HEK293 (cell line): ENCODE measurements at regions of chr13 and their contacts with region 1.

Region 1: GRCh38 chr13:77868714-77869113 is 49.9 kb downstream of the EDNRB start:
- H3K4me3 ChIP-seq: no peak overlapping the region
- H3K27ac ChIP-seq: no peak overlapping the region
- H3K4me1 ChIP-seq: no peaks in the 10 kb centered on the region
- CTCF ChIP-seq: no peak

Region 2: DNA sequence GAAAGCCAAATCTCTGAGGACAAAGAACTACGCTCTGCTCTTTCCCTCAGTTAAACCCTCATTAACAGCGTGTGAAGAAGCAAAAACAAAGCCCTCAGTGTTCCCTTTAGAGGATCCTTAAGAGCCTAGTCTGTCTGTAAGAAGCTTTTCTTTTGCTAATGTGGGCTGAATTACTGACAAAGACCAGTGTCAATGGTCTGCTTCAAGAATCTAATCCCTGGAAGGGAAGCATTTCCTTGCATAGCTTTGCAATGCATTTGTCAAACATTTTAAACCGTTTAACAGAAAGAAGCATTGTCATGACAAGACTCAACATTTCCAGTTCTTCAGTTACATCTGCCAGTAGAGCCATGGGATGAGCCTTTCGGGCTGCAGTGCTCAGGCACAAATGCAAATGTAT is 15.0 kb before region 1 on chr13:
- CTCF ChIA-PET with region 1: no interaction called
- POLR2A ChIA-PET with region 1: interaction called, 10 read pairs
- H3K4me3 ChIP-seq: no peak overlapping the region
- H3K27ac ChIP-seq: no peak overlapping the region
- H3K4me1 ChIP-seq: no peaks in the 10 kb centered on the region
- CTCF ChIP-seq: no peak

Region 3: DNA sequence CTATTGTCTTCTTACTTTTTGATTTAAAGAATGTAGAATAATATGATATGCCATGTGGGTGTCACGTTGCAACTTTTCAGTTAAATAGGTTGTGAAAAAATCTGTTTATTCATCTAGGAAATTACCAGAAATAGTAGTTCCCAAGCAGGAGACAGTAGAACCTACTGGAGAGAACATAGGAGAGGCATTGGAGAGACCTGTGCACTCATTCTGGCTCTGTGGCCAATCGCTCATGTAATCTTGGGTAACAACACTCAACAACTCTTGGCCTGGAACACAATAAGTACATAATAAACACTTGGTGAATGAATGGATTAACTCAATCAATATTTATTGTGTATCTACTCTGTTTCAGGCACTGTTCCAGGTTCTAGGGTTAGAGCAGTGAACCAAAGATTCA is 14.6 kb after region 1 on chr13:
- CTCF ChIA-PET with region 1: no interaction called
- POLR2A ChIA-PET with region 1: no interaction called
- H3K4me3 ChIP-seq: no peak overlapping the region
- H3K27ac ChIP-seq: no peak overlapping the region
- H3K4me1 ChIP-seq: no peaks in the 10 kb centered on the region
- CTCF ChIP-seq: no peak

Region 4: GRCh38 chr13:77898097-77898496 is 29.4 kb after region 1 on chr13:
- CTCF ChIA-PET with region 1: no interaction called
- POLR2A ChIA-PET with region 1: no interaction called
- H3K4me3 ChIP-seq: no peak overlapping the region
- H3K27ac ChIP-seq: no peak overlapping the region
- H3K4me1 ChIP-seq: no peaks in the 10 kb centered on the region
- CTCF ChIP-seq: no peak

Region 5: GRCh38 chr13:78299832-78300623 is 431.3 kb after region 1 on chr13:
- CTCF ChIA-PET with region 1: no interaction called
- POLR2A ChIA-PET with region 1: no interaction called
- H3K4me3 ChIP-seq: no peak overlapping the region
- H3K27ac ChIP-seq: no peak overlapping the region
- H3K4me1 ChIP-seq: no peaks in the 10 kb centered on the region
- CTCF ChIP-seq: no peak